Endothelial cell of umbilical vein (primary cell): ENCODE measurements at regions of chr5 and their contacts with region 1.

Region 1: GRCh38 chr5:100213483-100213882 is 321.7 kb upstream of the FAM174A start:
- DNase-seq: no peak
- H3K4me3 ChIP-seq: no peak overlapping the region
- H3K27ac ChIP-seq: no peak overlapping the region
- H3K4me1 ChIP-seq: no peaks in the 10 kb centered on the region
- H3K27me3 ChIP-seq: no peaks in the 10 kb centered on the region
- CTCF ChIP-seq: no peak
- POLR2A ChIP-seq: no peak

Region 2: GRCh38 chr5:99349787-99350186 is 863.7 kb before region 1 on chr5:
- CTCF ChIA-PET with region 1: no interaction called
- POLR2A ChIA-PET with region 1: no interaction called
- dilution Hi-C with region 1: no loop called
- intact Hi-C with region 1: loop called (anchors 5 kb)
- DNase-seq: no peak
- H3K4me3 ChIP-seq: no peak overlapping the region
- H3K27ac ChIP-seq: no peak overlapping the region
- H3K4me1 ChIP-seq: no peaks in the 10 kb centered on the region
- H3K27me3 ChIP-seq: no peaks in the 10 kb centered on the region
- CTCF ChIP-seq: no peak
- POLR2A ChIP-seq: no peak

Region 3: GRCh38 chr5:99814321-99815063 is 399.0 kb before region 1 on chr5:
- CTCF ChIA-PET with region 1: no interaction called
- POLR2A ChIA-PET with region 1: no interaction called
- dilution Hi-C with region 1: no loop called
- intact Hi-C with region 1: no loop called
- DNase-seq: no peak
- H3K4me3 ChIP-seq: no peak overlapping the region
- H3K27ac ChIP-seq: no peak overlapping the region
- H3K4me1 ChIP-seq: no peaks in the 10 kb centered on the region
- H3K27me3 ChIP-seq: no peaks in the 10 kb centered on the region
- CTCF ChIP-seq: no peak
- POLR2A ChIP-seq: no peak

Region 4: GRCh38 chr5:100249211-100249883 is 35.9 kb after region 1 on chr5:
- CTCF ChIA-PET with region 1: no interaction called
- POLR2A ChIA-PET with region 1: no interaction called
- dilution Hi-C with region 1: no loop called
- intact Hi-C with region 1: no loop called
- DNase-seq: no peak
- H3K4me3 ChIP-seq: no peak overlapping the region
- H3K27ac ChIP-seq: no peak overlapping the region
- H3K4me1 ChIP-seq: no peaks in the 10 kb centered on the region
- H3K27me3 ChIP-seq: no peaks in the 10 kb centered on the region
- CTCF ChIP-seq: no peak
- POLR2A ChIP-seq: no peak

Region 5: GRCh38 chr5:100311807-100312206 is 98.3 kb after region 1 on chr5:
- CTCF ChIA-PET with region 1: no interaction called
- POLR2A ChIA-PET with region 1: no interaction called
- dilution Hi-C with region 1: no loop called
- intact Hi-C with region 1: no loop called
- DNase-seq: peak; percentile 71
- H3K4me3 ChIP-seq: no peak overlapping the region
- H3K27ac ChIP-seq: no peak overlapping the region
- H3K4me1 ChIP-seq: no peaks in the 10 kb centered on the region
- H3K27me3 ChIP-seq: no peaks in the 10 kb centered on the region
- CTCF ChIP-seq: no peak
- POLR2A ChIP-seq: no peak